Caco-2 (cell line): ENCODE measurements at regions of chr4 and their contacts with region 1.

Region 1: DNA sequence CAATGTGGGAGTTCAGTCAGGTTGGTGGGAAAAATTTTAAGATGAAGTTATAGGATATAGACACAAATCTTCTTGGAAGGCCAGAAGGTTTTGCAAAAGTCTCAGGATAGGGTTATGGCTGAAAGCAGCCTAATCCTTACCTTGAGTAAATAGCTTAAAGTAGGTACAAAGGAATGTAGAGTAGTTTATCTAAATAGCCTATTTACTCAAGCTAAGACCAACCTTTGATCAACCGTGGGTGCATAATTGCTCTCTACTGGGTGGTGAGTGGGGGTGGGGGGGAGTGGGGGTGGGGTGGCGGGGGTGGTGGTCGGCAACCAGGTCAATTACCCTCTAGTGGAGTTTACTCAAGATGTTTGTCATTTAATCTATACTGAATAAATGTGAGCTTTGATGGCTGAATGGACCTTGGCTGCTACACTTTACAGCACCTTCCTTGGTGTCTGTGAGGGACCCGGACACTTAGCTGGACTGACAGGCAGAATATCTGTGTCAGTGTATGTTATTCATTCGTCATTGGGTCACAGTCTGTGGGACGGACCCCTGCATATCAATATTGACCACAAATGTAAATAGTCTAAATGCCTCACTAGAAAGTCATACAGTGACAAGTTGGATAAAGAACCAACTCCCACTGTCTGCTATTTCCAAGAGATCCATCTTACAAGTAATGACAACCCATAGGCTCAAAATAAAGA is 545.7 kb upstream of the PABPC4L start:
- DNase-seq: peak; percentile 63 to 79
- H3K4me3 ChIP-seq: no peak overlapping the region
- H3K4me3 Mint-ChIP-seq: peak overlapping the region; percentile 55
- H3K27ac Mint-ChIP-seq: peak overlapping the region; percentile 85
- H3K4me1 ChIP-seq: peaks cover 26% of the 10 kb centered on the region
- H3K4me1 Mint-ChIP-seq: peaks cover 20% of the 10 kb centered on the region
- H3K27me3 ChIP-seq: no peaks in the 10 kb centered on the region
- H3K27me3 Mint-ChIP-seq: no peaks in the 10 kb centered on the region
- CTCF ChIP-seq: no peak

Region 2: GRCh38 chr4:134622194-134622593 is 125.1 kb before region 1 on chr4:
- CTCF ChIA-PET with region 1: no interaction called
- POLR2A ChIA-PET with region 1: interaction called, 3 read pairs
- intact Hi-C with region 1: loop called (anchors 2 kb)
- DNase-seq: no peak
- H3K4me3 ChIP-seq: no peak overlapping the region
- H3K4me3 Mint-ChIP-seq: no peak overlapping the region
- H3K27ac Mint-ChIP-seq: no peak overlapping the region
- H3K4me1 ChIP-seq: peaks cover 32% of the 10 kb centered on the region
- H3K4me1 Mint-ChIP-seq: peaks cover 23% of the 10 kb centered on the region
- H3K27me3 ChIP-seq: no peaks in the 10 kb centered on the region
- H3K27me3 Mint-ChIP-seq: no peaks in the 10 kb centered on the region
- CTCF ChIP-seq: no peak

Region 3: GRCh38 chr4:134695432-134695831 is 51.8 kb before region 1 on chr4:
- CTCF ChIA-PET with region 1: no interaction called
- POLR2A ChIA-PET with region 1: no interaction called
- intact Hi-C with region 1: loop called (anchors 5 kb)
- DNase-seq: no peak
- H3K4me3 ChIP-seq: no peak overlapping the region
- H3K4me3 Mint-ChIP-seq: no peak overlapping the region
- H3K27ac Mint-ChIP-seq: no peak overlapping the region
- H3K4me1 ChIP-seq: no peaks in the 10 kb centered on the region
- H3K4me1 Mint-ChIP-seq: no peaks in the 10 kb centered on the region
- H3K27me3 ChIP-seq: no peaks in the 10 kb centered on the region
- H3K27me3 Mint-ChIP-seq: no peaks in the 10 kb centered on the region
- CTCF ChIP-seq: no peak